Activated naive CD4-positive, alpha-beta T cell treated with anti-CD3 and anti-CD28 coated beads for 36 hours (primary cell): ENCODE measurements at regions of chr3 and their contacts with region 1.

Region 1: GRCh38 chr3:160801386-160802118 is 45.5 kb downstream of the PPM1L start:
- DNase-seq: peak; percentile 72
- H3K4me3 Mint-ChIP-seq: no peak overlapping the region
- H3K27ac Mint-ChIP-seq: peak overlapping the region; percentile 69
- H3K4me1 Mint-ChIP-seq: peaks cover 10% of the 10 kb centered on the region
- H3K27me3 Mint-ChIP-seq: no peaks in the 10 kb centered on the region

Region 2: DNA sequence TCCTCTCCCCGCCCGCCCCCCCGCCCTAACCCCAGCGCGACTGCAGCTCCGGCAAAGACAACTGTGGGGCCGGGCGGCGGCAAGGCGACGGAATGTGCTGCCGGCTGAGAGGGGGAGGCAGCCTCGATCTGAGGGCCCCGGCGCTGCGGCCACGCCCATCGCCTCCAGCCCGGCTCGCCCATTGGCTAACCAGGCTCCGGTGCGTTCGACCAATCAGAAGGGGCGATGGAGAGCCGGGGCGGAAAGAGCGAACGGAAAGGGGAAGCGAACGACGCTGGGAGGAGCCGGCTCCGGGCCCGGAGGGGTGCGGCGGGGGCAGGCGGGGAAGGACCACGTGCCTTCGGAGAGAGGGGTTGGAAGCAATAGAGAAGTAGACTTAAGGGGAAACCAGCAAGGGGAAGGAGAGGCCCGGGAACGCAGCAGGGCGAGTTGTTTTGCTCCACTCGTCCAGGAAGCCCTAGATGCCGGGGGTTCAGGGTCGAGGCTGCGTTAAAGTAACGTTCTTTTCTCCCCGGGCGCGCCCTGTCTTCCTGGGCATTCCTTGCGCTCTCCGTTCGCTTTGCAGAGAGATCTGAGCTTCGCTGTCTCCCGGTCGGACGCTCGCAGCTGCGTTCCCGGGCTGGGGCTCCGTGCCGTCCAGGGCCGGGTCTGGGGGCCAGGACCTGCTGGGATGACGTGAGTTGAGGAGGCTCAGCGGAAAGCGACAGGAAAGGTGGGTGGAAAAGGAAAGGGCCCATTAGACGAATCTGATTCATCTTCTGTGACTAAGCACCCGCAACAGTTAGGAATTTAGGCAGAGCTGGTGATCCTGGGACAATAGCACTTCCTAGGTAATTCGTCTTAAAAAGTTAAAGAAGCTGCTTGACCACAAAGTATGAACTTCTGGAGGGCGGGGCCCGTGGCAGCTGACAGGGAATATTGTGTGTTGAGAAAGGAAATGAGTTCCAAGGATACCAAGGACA is 235.8 kb before region 1 on chr3 and contains the start of gene KPNA4:
- CTCF ChIA-PET with region 1: no interaction called
- intact Hi-C with region 1: loop called (anchors 2 kb)
- DNase-seq: peak; percentile 97
- H3K4me3 Mint-ChIP-seq: peak within 1 kb of the TSS; percentile 93
- H3K27ac Mint-ChIP-seq: peak within 1 kb of the TSS; percentile 97
- H3K4me1 Mint-ChIP-seq: peaks cover 40% of the 10 kb centered on the region
- H3K27me3 Mint-ChIP-seq: no peaks in the 10 kb centered on the region
- total RNA-seq, gene KPNA4: 43.2 to 59.4 TPM

Region 3: GRCh38 chr3:161149529-161149928 is 348.0 kb after region 1 on chr3:
- CTCF ChIA-PET with region 1: no interaction called
- intact Hi-C with region 1: no loop called
- DNase-seq: no peak
- H3K4me3 Mint-ChIP-seq: no peak overlapping the region
- H3K27ac Mint-ChIP-seq: no peak overlapping the region
- H3K4me1 Mint-ChIP-seq: no peaks in the 10 kb centered on the region
- H3K27me3 Mint-ChIP-seq: peaks cover 2% of the 10 kb centered on the region

Region 4: GRCh38 chr3:161310649-161311423 is 509.3 kb after region 1 on chr3:
- CTCF ChIA-PET with region 1: no interaction called
- intact Hi-C with region 1: loop called (anchors 2 kb)
- DNase-seq: peak; percentile 69
- H3K4me3 Mint-ChIP-seq: no peak overlapping the region
- H3K27ac Mint-ChIP-seq: peak overlapping the region; percentile 43
- H3K4me1 Mint-ChIP-seq: peaks cover 49% of the 10 kb centered on the region
- H3K27me3 Mint-ChIP-seq: no peaks in the 10 kb centered on the region

Region 5: GRCh38 chr3:161409069-161409468 is 607.5 kb after region 1 on chr3:
- CTCF ChIA-PET with region 1: no interaction called
- intact Hi-C with region 1: no loop called
- DNase-seq: peak; percentile 63
- H3K4me3 Mint-ChIP-seq: no peak overlapping the region
- H3K27ac Mint-ChIP-seq: no peak overlapping the region
- H3K4me1 Mint-ChIP-seq: peaks cover 20% of the 10 kb centered on the region
- H3K27me3 Mint-ChIP-seq: no peaks in the 10 kb centered on the region